ENCODE measurements at regions of chr19 and their contacts with region 1.

Region 1: GRCh38 chr19:11374433-11375142 is at the start of gene SWSAP1:
- H3K4me3 ChIP-seq: peak within 1 kb of the TSS; percentile 86
- H3K27ac ChIP-seq: peak within 1 kb of the TSS; percentile 86
- H3K4me1 ChIP-seq: peaks cover 4% of the 10 kb centered on the region; the same call in 1 of the 2 replicates
- CTCF ChIP-seq: no peak

Region 2: GRCh38 chr19:10986261-10987127 is 388.1 kb before region 1 on chr19:
- CTCF ChIA-PET with region 1: no interaction called
- POLR2A ChIA-PET with region 1: no interaction called
- H3K4me3 ChIP-seq: no peak overlapping the region
- H3K27ac ChIP-seq: peak overlapping the region; percentile 5; the same call in 1 of the 2 replicates
- H3K4me1 ChIP-seq: no peaks in the 10 kb centered on the region
- CTCF ChIP-seq: no peak

Region 3: DNA sequence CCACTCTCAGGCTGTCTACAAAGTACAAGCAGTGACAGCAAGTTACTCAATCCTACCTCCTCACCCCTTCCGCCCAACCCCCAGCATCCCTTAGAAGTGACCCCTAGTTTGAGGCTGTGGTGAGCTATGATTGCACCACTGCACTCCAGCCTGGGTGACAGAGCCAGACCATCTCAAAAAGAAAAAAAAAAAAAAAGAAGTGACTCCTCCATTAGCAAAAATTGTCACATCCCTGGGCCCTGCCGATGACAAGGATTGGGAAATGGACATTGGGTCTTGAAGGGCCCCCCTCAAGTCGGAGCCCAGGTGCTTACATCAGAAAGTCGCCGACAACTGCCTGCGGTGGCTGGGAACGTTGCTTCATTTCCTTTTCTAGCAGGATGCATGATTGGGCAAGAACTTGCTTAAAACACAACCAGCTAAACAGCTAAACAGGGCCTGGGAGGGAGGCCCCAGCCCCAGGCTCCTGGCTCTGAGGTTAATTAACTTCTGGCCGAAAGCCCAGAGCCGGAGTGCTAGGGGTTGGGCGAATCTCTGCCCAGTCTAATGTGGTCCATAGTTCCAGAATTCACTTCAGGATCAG is 50.4 kb before region 1 on chr19:
- CTCF ChIA-PET with region 1: interaction called, 4 read pairs
- POLR2A ChIA-PET with region 1: interaction called, 14 read pairs
- H3K4me3 ChIP-seq: no peak overlapping the region
- H3K27ac ChIP-seq: peak overlapping the region; percentile 63; the same call in 1 of the 2 replicates
- H3K4me1 ChIP-seq: peaks cover 20% of the 10 kb centered on the region
- CTCF ChIP-seq: no peak

Region 4: DNA sequence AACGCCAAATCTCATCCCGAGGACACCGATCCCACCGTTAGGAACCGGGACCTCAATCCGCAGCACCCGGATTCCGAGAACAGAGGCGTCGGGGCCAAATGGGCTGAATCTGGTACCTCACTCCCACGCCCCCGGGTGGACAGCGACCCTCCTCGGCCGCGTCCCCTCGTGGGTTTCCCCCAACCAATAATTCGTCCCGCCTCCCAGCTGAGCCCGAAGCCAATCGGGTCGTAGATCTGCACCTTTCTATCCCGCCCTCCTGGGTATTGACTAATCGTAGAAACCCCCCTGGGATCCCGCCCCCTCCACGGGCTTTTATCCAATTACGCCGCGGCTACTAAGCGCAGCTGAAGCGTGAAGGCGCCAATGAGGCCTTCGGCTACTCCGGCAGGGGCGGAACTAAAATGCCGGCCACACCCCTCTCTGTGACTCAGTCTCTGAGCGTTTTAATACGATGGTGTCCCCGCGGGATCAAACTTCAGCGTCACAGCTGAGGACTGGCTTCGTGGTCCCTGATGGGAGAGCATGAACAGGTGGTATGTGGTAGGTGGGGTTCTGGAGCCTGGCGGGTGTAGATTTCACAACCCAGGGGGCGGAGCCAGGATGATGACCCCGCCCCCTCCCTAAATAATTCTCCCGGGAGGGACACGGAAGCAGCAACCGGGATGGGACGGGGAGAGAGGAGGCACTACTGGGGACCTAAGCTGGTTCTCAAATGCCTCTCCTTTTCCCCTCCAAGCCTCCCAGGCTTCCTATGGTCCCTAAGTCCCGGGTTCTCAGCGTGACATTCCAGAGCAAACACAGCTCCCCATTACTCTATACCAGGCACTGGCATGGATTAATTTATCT is 28.3 kb before region 1 on chr19 and contains the starts of genes CCDC159 and TMEM205:
- CTCF ChIA-PET with region 1: no interaction called
- POLR2A ChIA-PET with region 1: interaction called, 36 read pairs
- H3K4me3 ChIP-seq: peak within 1 kb of the TSS; percentile 72
- H3K27ac ChIP-seq: peak within 1 kb of the TSS; percentile 55; the same call in 1 of the 2 replicates
- H3K4me1 ChIP-seq: no peaks in the 10 kb centered on the region
- CTCF ChIP-seq: peak; percentile 88

Region 5: DNA sequence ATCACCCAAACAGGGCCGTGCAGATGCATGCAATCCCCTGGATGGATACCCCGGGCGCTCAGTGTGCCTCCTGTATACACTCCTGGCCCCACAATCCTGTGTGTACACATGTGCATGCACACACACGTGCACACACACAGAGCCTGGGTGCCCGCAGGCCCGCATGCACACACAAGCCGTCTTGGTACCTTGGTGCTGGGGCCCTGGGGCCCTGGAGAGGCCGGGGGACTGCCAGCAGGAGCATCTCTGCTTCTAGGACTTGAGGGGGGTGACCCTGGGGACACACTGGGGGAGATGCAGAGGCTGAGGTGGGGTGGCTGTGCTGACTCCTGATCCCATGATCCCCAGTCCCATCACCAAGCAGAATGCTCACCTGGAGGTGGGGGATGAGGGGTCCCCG is 25.1 kb after region 1 on chr19:
- CTCF ChIA-PET with region 1: no interaction called
- POLR2A ChIA-PET with region 1: no interaction called
- H3K4me3 ChIP-seq: no peak overlapping the region
- H3K27ac ChIP-seq: no peak overlapping the region
- H3K4me1 ChIP-seq: no peaks in the 10 kb centered on the region
- CTCF ChIP-seq: no peak

Region 6: GRCh38 chr19:11435058-11435832 is 60.7 kb after region 1 on chr19 and contains the starts of genes ODAD3 and PRKCSH:
- CTCF ChIA-PET with region 1: interaction called, 5 read pairs
- POLR2A ChIA-PET with region 1: interaction called, 20 read pairs
- H3K4me3 ChIP-seq: peak within 1 kb of the TSS; percentile 91
- H3K27ac ChIP-seq: peak within 1 kb of the TSS; percentile 4; the same call in 1 of the 2 replicates
- H3K4me1 ChIP-seq: 0 out of 2 replicates have a peak, but pooled peaks cover 4% of the 10 kb centered on the region
- CTCF ChIP-seq: peak; percentile 96

Region 7: GRCh38 chr19:11528551-11529341 is 154.2 kb after region 1 on chr19 and contains the start of gene ECSIT:
- CTCF ChIA-PET with region 1: no interaction called
- POLR2A ChIA-PET with region 1: no interaction called
- H3K4me3 ChIP-seq: peak within 1 kb of the TSS; percentile 93
- H3K27ac ChIP-seq: peak within 1 kb of the TSS; percentile 61
- H3K4me1 ChIP-seq: no peaks in the 10 kb centered on the region
- CTCF ChIP-seq: no peak